OCI-LY7 (cell line): ENCODE measurements at regions of chr13 and their contacts with region 1.

Region 1: GRCh38 chr13:50911937-50912795 is 2.6 kb downstream of the RNASEH2B start:
- DNase-seq: peak; percentile 98
- H3K4me3 ChIP-seq: peak overlapping the region; percentile 99
- H3K27ac ChIP-seq: peak overlapping the region; percentile 89
- H3K4me1 ChIP-seq: peaks cover 77% of the 10 kb centered on the region
- CTCF ChIP-seq: peak; percentile 96

Region 2: DNA sequence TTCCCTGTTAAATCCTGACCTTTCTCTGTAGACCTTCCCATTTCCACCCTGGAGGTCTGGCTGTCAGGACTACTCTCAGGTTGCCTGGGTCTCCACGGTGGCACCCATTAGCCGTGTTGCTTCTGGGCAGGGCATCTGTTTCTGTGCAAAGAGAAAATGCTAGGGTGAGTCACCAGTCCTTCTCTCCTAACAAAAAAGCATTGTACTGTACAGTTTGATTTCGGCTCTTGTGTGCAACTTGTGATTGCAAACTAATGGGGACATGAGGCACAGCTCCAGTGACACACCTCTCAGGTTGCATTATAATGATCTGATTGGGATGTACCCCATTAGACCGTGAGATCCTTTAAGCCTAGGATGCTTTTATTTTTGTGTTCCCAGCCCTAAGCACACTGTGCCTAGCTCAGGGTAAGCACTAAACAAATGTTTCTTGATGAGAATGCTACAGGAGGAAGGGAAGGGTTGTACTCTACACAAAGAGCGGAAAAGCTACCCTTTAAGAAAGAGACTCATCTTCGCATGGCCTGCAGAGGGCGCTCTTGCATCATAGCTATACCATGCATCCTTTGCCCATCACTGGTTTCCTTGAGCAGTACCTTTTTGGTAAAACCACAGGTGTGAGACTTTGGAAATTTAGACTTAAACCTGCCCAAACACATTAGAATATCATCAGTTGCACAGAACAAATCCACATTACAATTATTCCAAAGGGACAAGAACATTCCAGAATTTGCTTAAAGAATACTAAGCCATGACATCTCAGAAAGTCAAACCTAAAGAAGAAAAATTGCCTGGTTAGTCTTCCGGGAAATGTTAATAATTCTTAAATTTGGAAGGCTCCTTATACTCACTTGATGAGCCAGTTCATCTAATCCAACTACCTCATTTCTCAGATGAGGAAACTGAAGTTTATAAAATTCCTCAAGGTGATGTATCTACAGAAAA is 935.6 kb before region 1 on chr13:
- CTCF ChIA-PET with region 1: no interaction called
- POLR2A ChIA-PET with region 1: no interaction called
- intact Hi-C with region 1: loop called (anchors 1 kb)
- DNase-seq: peak; percentile 87
- H3K4me3 ChIP-seq: no peak overlapping the region
- H3K27ac ChIP-seq: no peak overlapping the region
- H3K4me1 ChIP-seq: peaks cover 8% of the 10 kb centered on the region
- CTCF ChIP-seq: peak; percentile 99

Region 3: DNA sequence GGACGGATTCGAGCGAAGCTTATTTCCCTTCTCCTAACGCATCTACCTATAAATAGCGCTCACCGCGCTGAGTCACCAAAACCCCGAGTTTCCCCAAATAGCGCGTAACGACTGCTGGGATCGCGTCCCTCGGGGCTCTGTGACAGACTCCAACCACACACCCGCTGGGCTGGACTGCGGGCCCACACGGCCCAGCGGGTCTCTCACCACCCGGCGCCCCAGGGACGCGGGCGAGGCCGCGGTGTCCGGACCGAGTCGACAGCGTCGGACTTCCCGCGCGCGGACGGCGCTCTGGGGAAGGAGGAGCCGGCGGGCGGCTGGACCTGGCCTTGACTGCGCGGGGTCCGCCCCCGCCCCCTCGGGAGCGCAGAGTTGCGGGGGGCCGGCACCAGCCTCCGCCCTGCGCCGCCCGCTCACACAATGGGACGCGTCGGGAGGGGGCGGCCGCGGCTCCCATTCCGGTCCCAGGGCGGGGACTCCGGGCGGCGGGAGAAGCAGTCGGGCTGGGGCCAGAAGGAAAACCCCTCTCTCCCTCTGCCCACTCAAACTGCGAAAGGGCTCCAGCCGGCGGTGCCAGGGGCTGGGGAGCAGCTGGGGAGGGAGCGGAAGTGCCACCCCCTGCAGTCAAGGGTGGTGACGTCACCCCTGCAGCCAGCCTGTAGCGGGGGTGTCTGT is 788.2 kb before region 1 on chr13:
- CTCF ChIA-PET with region 1: no interaction called
- POLR2A ChIA-PET with region 1: interaction called, 9 read pairs
- intact Hi-C with region 1: loop called (anchors 1 kb)
- DNase-seq: no peak
- H3K4me3 ChIP-seq: peak overlapping the region; percentile 81
- H3K27ac ChIP-seq: peak overlapping the region; percentile 56
- H3K4me1 ChIP-seq: peaks cover 64% of the 10 kb centered on the region
- CTCF ChIP-seq: no peak

Region 4: DNA sequence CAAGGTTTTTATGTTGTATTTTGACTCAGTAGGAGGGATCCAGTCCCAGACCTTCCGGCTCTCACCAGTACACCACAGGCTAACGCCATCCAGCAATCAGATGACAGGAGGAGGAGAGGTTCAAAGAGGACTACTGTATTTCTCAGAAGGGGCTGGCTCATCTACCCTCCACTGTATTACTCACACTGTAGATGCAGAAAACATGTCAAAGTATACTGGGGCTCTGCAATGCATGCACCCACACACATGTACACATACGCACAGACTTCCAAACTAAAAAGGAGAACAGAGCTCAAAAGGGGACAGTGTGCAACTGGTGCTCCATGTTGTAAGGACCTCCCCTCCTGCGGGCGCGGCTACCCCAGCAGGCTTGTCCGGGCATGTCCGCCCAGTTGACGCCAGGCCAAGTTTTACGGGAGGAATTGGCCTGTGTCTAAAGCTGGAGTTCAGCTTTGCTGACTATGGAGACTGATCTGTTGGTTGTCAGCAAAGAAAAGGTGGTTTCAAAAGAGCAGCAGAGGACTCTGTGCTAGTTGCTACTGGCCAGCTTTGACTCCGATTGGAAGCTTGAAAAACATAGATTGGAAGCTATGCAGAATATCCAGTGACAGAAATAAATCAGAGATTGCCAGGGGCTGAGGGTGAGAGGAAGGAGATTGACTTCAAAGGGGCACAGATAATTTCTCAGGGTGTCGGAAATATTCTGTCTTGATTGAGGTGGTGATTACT is 382.8 kb before region 1 on chr13:
- CTCF ChIA-PET with region 1: interaction called, 3 read pairs
- POLR2A ChIA-PET with region 1: interaction called, 5 read pairs
- intact Hi-C with region 1: loop called (anchors 5 kb)
- DNase-seq: no peak
- H3K4me3 ChIP-seq: no peak overlapping the region
- H3K27ac ChIP-seq: no peak overlapping the region
- H3K4me1 ChIP-seq: peaks cover 54% of the 10 kb centered on the region
- CTCF ChIP-seq: no peak

Region 5: GRCh38 chr13:50801087-50801931 is 110.9 kb before region 1 on chr13:
- CTCF ChIA-PET with region 1: interaction called, 17 read pairs
- POLR2A ChIA-PET with region 1: interaction called, 7 read pairs
- intact Hi-C with region 1: loop called (anchors 1 kb)
- DNase-seq: peak; percentile 90
- H3K4me3 ChIP-seq: no peak overlapping the region
- H3K27ac ChIP-seq: peak overlapping the region; percentile 2
- H3K4me1 ChIP-seq: peaks cover 35% of the 10 kb centered on the region
- CTCF ChIP-seq: peak; percentile 93

Region 6: DNA sequence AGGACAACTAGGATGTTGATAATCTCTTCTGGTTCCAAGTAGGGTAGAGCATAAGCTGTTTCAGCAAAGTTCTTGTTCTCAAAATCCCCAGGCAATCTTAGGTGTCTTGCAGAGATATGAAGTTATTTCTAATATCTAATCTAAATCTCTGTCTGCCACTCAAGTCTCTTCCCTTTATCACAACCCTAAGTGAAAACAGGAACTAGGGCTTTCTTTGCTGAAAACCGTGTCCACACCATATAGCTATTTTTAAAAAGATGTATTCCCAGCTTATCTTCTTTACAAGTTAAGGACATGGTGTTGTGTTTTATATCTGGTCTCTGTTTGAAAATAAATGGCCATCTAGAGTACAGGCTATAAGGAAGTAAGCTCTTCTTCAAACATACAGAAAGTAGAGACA is 13.8 kb before region 1 on chr13:
- CTCF ChIA-PET with region 1: interaction called, 13 read pairs
- POLR2A ChIA-PET with region 1: interaction called, 226 read pairs
- intact Hi-C with region 1: loop called (anchors 1 kb)
- DNase-seq: peak; percentile 36
- H3K4me3 ChIP-seq: no peak overlapping the region
- H3K27ac ChIP-seq: peak overlapping the region; percentile 96
- H3K4me1 ChIP-seq: peaks cover 93% of the 10 kb centered on the region
- CTCF ChIP-seq: no peak